ENCODE measurements at regions of chr17 and their contacts with region 1.

Region 1: GRCh38 chr17:13813347-13814240 is 211.9 kb upstream of the HS3ST3A1 start:
- DNase-seq: no peak
- ATAC-seq: peak; percentile 67 to 78 (median 70)
- H3K4me3 ChIP-seq: peak overlapping the region in 1 of 3 donors; percentile 1
- H3K27ac ChIP-seq: no peak overlapping the region
- H3K4me1 ChIP-seq: peaks cover 0 to 12% (median 0%) of the 10 kb centered on the region in 4 donors
- H3K27me3 ChIP-seq: no peaks in the 10 kb centered on the region
- CTCF ChIP-seq: no peak
- POLR2A ChIP-seq: no peak

Region 2: GRCh38 chr17:13864551-13864950 is 51.0 kb after region 1 on chr17:
- intact Hi-C with region 1: no loop called
- DNase-seq: no peak
- ATAC-seq: no peak
- H3K4me3 ChIP-seq: no peak overlapping the region
- H3K27ac ChIP-seq: no peak overlapping the region
- H3K4me1 ChIP-seq: no peaks in the 10 kb centered on the region
- H3K27me3 ChIP-seq: no peaks in the 10 kb centered on the region
- CTCF ChIP-seq: no peak
- POLR2A ChIP-seq: no peak

Region 3: GRCh38 chr17:13909901-13910519 is 96.4 kb after region 1 on chr17:
- intact Hi-C with region 1: loop called in 1 of 2 experiments (anchors 10 kb)
- DNase-seq: peak; percentile 79 to 94 (median 90)
- ATAC-seq: peak; percentile 99 to 100 (median 99)
- H3K4me3 ChIP-seq: no peak overlapping the region
- H3K27ac ChIP-seq: peak overlapping the region in 2 of 3 donors; percentile 48 to 65
- H3K4me1 ChIP-seq: peaks cover 0 to 26% (median 13%) of the 10 kb centered on the region in 4 donors
- H3K27me3 ChIP-seq: no peaks in the 10 kb centered on the region
- CTCF ChIP-seq: peak in 2 of 4 donors; percentile 28 to 38
- POLR2A ChIP-seq: no peak